ENCODE measurements at regions of chr5 and their contacts with region 1.

Region 1: GRCh38 chr5:170429014-170429413 is 39.8 kb upstream of the KCNMB1 start:
- DNase-seq: no peak
- H3K4me3 ChIP-seq: no peak overlapping the region
- H3K27ac ChIP-seq: no peak overlapping the region
- H3K4me1 ChIP-seq: peaks cover 0 to 6% (median 2%) of the 10 kb centered on the region in 4 experiments; a peak in 1 of 7 replicates
- H3K27me3 ChIP-seq: no peaks in the 10 kb centered on the region; a peak in 1 of 7 replicates
- CTCF ChIP-seq: peak; percentile 38 to 50 (median 40); a peak in 3 of 4 replicates
- EP300 ChIP-seq: no peak
- POLR2A ChIP-seq: no peak
- RAD21 ChIP-seq: peak in 1 of 2 experiments; percentile 49; a peak in 2 of 4 replicates

Region 2: GRCh38 chr5:170021506-170021905 is 407.5 kb before region 1 on chr5:
- CTCF ChIA-PET with region 1: no interaction called
- POLR2A ChIA-PET with region 1: no interaction called
- DNase-seq: no peak
- H3K4me3 ChIP-seq: no peak overlapping the region
- H3K27ac ChIP-seq: no peak overlapping the region
- H3K4me1 ChIP-seq: no peaks in the 10 kb centered on the region
- H3K27me3 ChIP-seq: no peaks in the 10 kb centered on the region; a peak in 1 of 7 replicates
- CTCF ChIP-seq: no peak
- EP300 ChIP-seq: no peak
- POLR2A ChIP-seq: no peak
- RAD21 ChIP-seq: no peak

Region 3: DNA sequence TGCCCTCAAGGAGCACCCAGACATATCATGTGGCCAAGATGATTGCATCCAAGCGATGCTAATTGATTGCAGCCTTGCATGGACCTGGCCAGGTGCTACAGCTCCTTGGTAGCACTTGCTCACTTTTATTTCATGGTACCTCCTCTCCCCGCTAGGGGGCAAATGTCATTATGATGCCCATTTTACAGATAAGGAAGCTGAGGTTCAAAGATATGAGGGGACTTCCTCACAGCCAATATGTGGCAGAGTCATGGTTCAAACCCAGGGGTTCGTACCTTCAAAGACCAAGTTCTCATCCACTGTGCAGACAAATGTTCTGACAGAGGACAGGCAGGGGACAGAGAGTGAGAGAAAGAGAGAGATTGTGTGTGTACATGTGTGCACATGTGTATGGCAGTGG is 17.9 kb before region 1 on chr5:
- CTCF ChIA-PET with region 1: interaction called, 11 read pairs
- POLR2A ChIA-PET with region 1: no interaction called
- DNase-seq: no peak
- H3K4me3 ChIP-seq: no peak overlapping the region
- H3K27ac ChIP-seq: no peak overlapping the region
- H3K4me1 ChIP-seq: peaks cover 7 to 17% (median 12%) of the 10 kb centered on the region in 4 experiments
- H3K27me3 ChIP-seq: no peaks in the 10 kb centered on the region
- CTCF ChIP-seq: peak in 1 of 3 experiments; percentile 36; a peak in 1 of 4 replicates
- EP300 ChIP-seq: no peak
- POLR2A ChIP-seq: no peak
- RAD21 ChIP-seq: no peak

Region 4: DNA sequence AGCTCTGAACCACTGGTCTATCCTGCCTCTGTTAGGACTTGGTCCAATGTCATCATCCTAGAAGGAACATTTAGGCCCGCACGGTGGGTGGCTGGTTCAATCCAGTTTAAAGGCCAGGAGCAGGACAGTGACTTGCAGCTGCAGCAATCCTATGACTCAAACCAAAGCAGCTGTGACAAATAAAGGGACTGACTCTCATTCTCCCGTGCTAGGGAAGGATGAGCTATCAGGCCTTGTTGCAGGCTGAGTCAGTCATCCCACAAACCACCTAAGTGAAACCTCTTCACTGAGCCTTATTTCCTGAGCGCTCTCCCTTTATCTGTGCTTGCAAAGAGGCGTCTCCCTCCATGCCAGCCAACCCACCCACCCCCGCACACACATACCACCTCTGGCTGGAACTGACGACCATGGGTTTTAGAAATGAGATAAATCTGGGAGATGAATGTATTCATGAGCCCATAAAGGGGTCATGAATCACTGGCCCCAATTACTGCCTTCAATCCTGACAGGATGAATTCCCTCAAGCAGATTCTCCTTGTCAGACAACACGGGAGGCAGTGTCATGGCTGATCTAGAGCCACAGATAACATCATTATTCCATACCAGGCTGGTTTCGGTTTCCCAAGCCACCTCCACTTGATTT is 168.2 kb after region 1 on chr5:
- CTCF ChIA-PET with region 1: interaction called, 22 read pairs
- POLR2A ChIA-PET with region 1: no interaction called
- DNase-seq: no peak
- H3K4me3 ChIP-seq: no peak overlapping the region
- H3K27ac ChIP-seq: no peak overlapping the region
- H3K4me1 ChIP-seq: peaks cover 0 to 2% (median 0%) of the 10 kb centered on the region in 4 experiments; a peak in 1 of 7 replicates
- H3K27me3 ChIP-seq: no peaks in the 10 kb centered on the region; a peak in 1 of 7 replicates
- CTCF ChIP-seq: no peak
- EP300 ChIP-seq: no peak
- POLR2A ChIP-seq: no peak
- RAD21 ChIP-seq: no peak

Region 5: DNA sequence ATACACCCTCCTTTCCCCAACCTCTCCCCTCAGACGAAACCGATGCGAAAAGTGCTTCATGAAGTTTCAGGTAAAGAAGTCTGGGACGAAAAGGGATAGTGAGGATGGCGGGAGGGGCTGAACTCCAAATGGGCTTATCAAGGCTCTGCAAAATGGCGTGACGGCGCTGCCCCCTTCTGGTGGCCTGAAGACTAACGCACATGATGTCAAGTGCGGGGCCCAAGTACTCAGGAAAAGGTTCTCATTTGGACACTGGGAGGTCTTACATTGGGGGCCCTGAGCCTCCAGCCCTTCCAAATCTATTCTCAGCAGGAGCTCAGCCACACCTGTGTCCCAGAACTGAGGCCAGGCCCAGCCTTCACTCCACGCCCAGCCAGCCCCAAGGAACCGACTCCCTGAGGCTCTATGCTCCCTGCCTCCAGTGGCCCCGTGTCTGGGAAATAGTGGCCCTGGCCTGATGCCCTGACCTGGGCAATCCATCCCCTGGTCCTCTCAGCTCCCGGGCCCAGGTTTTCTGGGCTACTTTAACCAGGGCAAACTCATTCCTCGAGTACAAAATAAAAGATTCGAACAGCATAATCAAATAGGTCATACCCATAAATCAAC is 194.7 kb after region 1 on chr5:
- CTCF ChIA-PET with region 1: interaction called, 160 read pairs
- POLR2A ChIA-PET with region 1: interaction called, 3 read pairs
- DNase-seq: peak in 1 of 2 experiments; percentile 79
- H3K4me3 ChIP-seq: no peak overlapping the region
- H3K27ac ChIP-seq: no peak overlapping the region
- H3K4me1 ChIP-seq: peaks cover 0 to 10% (median 3%) of the 10 kb centered on the region in 4 experiments; a peak in 6 of 7 replicates
- H3K27me3 ChIP-seq: no peaks in the 10 kb centered on the region; a peak in 2 of 7 replicates
- CTCF ChIP-seq: peak in 2 of 3 experiments; percentile 93; a peak in 3 of 4 replicates
- EP300 ChIP-seq: no peak
- POLR2A ChIP-seq: no peak
- RAD21 ChIP-seq: peak; percentile 96 to 98

Region 6: DNA sequence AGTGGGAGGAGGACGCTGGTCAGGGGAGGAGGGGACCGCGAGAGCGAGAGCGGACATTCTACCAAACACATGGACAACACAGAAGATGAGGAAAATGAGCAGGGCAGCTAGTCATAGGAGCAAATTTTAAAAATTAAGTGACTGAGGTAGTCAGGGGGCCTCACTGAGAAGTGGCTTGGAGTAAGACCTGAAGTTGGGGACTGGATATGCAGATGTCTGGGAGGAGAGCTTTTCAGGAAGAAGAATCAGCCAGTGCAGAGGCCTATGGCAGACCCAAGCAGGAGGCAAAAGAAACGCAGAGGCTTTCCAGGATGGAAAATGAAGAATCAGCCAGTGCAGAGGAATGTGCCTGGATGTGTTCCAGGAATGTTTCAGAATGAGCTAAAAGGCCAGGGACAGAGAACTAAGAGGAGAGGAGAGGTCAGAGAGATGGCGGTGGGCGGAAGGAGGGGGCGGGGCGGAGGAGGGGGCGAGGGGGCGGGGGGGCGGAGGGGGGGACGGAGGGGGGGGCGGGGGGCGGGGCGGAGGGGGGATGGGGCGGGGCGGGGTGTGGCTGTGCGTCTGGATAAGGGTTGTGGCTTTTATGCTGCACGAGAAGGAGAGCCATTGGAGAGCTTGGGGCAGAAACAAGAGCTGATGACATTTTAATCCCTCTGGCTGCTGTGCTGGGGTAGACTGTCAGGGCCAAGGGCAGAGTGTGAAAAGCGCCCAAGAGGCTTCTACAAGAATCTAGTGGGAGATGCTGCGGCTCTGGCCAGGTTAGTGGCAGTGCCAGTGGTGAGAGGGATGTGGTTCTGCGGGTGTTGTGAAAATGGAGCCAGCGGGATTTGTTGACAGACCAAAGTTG is 204.4 kb after region 1 on chr5:
- CTCF ChIA-PET with region 1: interaction called, 160 read pairs
- POLR2A ChIA-PET with region 1: no interaction called
- DNase-seq: no peak
- H3K4me3 ChIP-seq: peak overlapping the region; percentile 51 to 71 (median 60)
- H3K27ac ChIP-seq: peak overlapping the region; percentile 45
- H3K4me1 ChIP-seq: peaks cover 10 to 21% (median 18%) of the 10 kb centered on the region in 4 experiments
- H3K27me3 ChIP-seq: no peaks in the 10 kb centered on the region
- CTCF ChIP-seq: no peak
- EP300 ChIP-seq: no peak
- POLR2A ChIP-seq: peak in 1 of 2 experiments; percentile 16; a peak in 1 of 3 replicates
- RAD21 ChIP-seq: no peak